ENCODE measurements at regions of chr2 and their contacts with region 1.

Region 1: GRCh38 chr2:11955314-11955713 is 208.9 kb downstream of the LPIN1 start:
- DNase-seq: peak; percentile 3
- ATAC-seq: no peak
- H3K4me3 ChIP-seq: no peak overlapping the region
- H3K27ac ChIP-seq: no peak overlapping the region
- H3K4me1 ChIP-seq: no peaks in the 10 kb centered on the region
- H3K27me3 ChIP-seq: peaks cover 13% of the 10 kb centered on the region
- CTCF ChIP-seq: no peak
- POLR2A ChIP-seq: no peak
- RAD21 ChIP-seq: no peak

Region 2: DNA sequence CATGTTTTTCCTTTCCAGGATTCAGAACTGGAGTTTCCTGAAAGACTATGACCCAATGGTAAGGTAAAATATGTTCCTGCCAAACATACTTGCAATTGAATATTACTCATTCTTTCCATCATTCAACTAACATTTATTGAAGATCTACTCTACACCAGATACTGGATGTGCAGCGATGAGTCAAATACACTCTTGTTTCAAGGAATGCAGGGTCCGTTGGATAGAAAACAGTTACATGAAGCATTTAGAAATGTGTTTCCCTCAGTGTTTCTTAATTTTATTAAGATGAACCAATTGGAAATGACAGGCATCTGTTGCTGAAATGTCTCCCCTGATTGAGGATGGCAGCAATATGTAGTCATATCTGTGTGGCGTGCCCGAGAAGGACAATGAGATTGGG is 814.8 kb before region 1 on chr2:
- CTCF ChIA-PET with region 1: no interaction called
- POLR2A ChIA-PET with region 1: no interaction called
- dilution Hi-C with region 1: no loop called
- in situ Hi-C with region 1: no loop called
- intact Hi-C with region 1: no loop called
- DNase-seq: peak; percentile 62
- ATAC-seq: no peak
- H3K4me3 ChIP-seq: no peak overlapping the region
- H3K27ac ChIP-seq: no peak overlapping the region
- H3K4me1 ChIP-seq: no peaks in the 10 kb centered on the region; the same call in 1 of the 2 replicates
- H3K27me3 ChIP-seq: peaks cover 14% of the 10 kb centered on the region
- CTCF ChIP-seq: no peak
- POLR2A ChIP-seq: no peak
- RAD21 ChIP-seq: no peak

Region 3: GRCh38 chr2:11914455-11914854 is 40.9 kb before region 1 on chr2:
- CTCF ChIA-PET with region 1: no interaction called
- POLR2A ChIA-PET with region 1: no interaction called
- dilution Hi-C with region 1: no loop called
- in situ Hi-C with region 1: no loop called
- intact Hi-C with region 1: no loop called
- DNase-seq: no peak
- ATAC-seq: no peak
- H3K4me3 ChIP-seq: no peak overlapping the region
- H3K27ac ChIP-seq: no peak overlapping the region
- H3K4me1 ChIP-seq: no peaks in the 10 kb centered on the region
- H3K27me3 ChIP-seq: peaks cover 3% of the 10 kb centered on the region; the same call in 1 of the 2 replicates
- CTCF ChIP-seq: no peak
- POLR2A ChIP-seq: no peak
- RAD21 ChIP-seq: no peak

Region 4: GRCh38 chr2:11980809-11981208 is 25.5 kb after region 1 on chr2:
- CTCF ChIA-PET with region 1: interaction called, 10 read pairs
- POLR2A ChIA-PET with region 1: no interaction called
- dilution Hi-C with region 1: no loop called
- in situ Hi-C with region 1: no loop called
- intact Hi-C with region 1: no loop called
- DNase-seq: no peak
- ATAC-seq: no peak
- H3K4me3 ChIP-seq: no peak overlapping the region
- H3K27ac ChIP-seq: no peak overlapping the region
- H3K4me1 ChIP-seq: no peaks in the 10 kb centered on the region
- H3K27me3 ChIP-seq: peaks cover 2% of the 10 kb centered on the region
- CTCF ChIP-seq: no peak
- POLR2A ChIP-seq: no peak
- RAD21 ChIP-seq: no peak